ENCODE measurements at regions of chr1 and their contacts with region 1.

Region 1: GRCh38 chr1:110630839-110631663 is 24.9 kb upstream of the KCNA2 start:
- DNase-seq: peak; percentile 69 to 82
- ATAC-seq: peak; percentile 68 to 86 (median 80)
- H3K4me3 ChIP-seq: no peak overlapping the region
- H3K27ac ChIP-seq: no peak overlapping the region
- H3K4me1 ChIP-seq: no peaks in the 10 kb centered on the region
- H3K27me3 ChIP-seq: no peaks in the 10 kb centered on the region
- CTCF ChIP-seq: peak; percentile 72

Region 2: DNA sequence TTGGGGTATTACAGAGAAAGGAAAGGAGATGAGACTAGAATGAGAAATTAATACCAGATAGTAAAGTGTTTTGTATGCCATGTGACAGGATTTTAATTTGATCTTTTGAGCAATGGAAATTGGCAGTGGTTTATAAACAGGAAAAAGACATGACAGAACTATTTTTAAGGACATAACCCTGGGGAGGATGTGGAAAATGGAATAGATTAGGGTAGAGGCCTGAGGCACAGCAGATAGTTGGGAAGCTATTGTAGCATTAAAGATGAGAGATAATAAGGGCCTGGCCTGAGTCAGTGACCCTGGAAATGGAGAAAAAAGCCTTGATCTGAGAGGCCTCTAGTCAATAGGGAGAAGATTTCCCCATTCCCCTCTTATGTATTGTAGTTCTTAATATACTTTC is 65.8 kb after region 1 on chr1:
- intact Hi-C with region 1: no loop called
- DNase-seq: no peak
- ATAC-seq: no peak
- H3K4me3 ChIP-seq: no peak overlapping the region
- H3K27ac ChIP-seq: no peak overlapping the region
- H3K4me1 ChIP-seq: no peaks in the 10 kb centered on the region
- H3K27me3 ChIP-seq: no peaks in the 10 kb centered on the region
- CTCF ChIP-seq: no peak

Region 3: GRCh38 chr1:110766025-110766647 is 135.1 kb after region 1 on chr1:
- intact Hi-C with region 1: loop called (anchors 1 to 5 kb)
- DNase-seq: no peak
- ATAC-seq: peak in 1 of 4 donors; percentile 58
- H3K4me3 ChIP-seq: no peak overlapping the region
- H3K27ac ChIP-seq: no peak overlapping the region
- H3K4me1 ChIP-seq: no peaks in the 10 kb centered on the region
- H3K27me3 ChIP-seq: peaks cover 3 to 8% (median 3%) of the 10 kb centered on the region in 3 donors
- CTCF ChIP-seq: peak; percentile 76

Region 4: GRCh38 chr1:110780600-110781484 is 149.8 kb after region 1 on chr1:
- intact Hi-C with region 1: loop called (anchors 2 kb)
- DNase-seq: peak; percentile 32 to 61
- ATAC-seq: peak; percentile 51 to 77 (median 66)
- H3K4me3 ChIP-seq: no peak overlapping the region
- H3K27ac ChIP-seq: no peak overlapping the region
- H3K4me1 ChIP-seq: no peaks in the 10 kb centered on the region
- H3K27me3 ChIP-seq: peaks cover 0 to 8% (median 0%) of the 10 kb centered on the region in 3 donors
- CTCF ChIP-seq: peak; percentile 65

Region 5: DNA sequence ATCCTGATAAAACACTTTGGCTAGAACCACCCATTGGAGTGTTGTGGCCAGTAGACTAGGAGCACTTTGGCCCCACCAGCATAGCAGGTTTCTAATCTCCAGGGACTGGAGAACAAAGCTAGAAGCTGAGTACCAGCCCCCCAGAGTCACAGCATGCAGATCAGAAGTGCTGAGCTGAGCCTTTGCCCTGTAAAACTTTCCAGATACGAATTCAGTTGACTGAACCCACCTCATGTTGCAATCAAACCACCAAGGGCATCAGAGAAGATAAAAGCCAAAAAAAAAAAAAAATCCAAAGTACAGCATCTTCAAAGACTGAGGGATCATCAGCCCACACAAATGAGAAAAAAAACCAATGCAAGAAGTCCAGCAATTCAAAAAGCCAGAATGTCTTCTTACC is 233.2 kb after region 1 on chr1:
- intact Hi-C with region 1: no loop called
- DNase-seq: no peak
- ATAC-seq: no peak
- H3K4me3 ChIP-seq: no peak overlapping the region
- H3K27ac ChIP-seq: no peak overlapping the region
- H3K4me1 ChIP-seq: no peaks in the 10 kb centered on the region
- H3K27me3 ChIP-seq: no peaks in the 10 kb centered on the region
- CTCF ChIP-seq: no peak